HEK293 (cell line): ENCODE measurements at regions of chr16 and their contacts with region 1.

Region 1: GRCh38 chr16:12573730-12574383 is 229.8 kb downstream of the CPPED1 start:
- H3K4me3 ChIP-seq: no peak overlapping the region
- H3K27ac ChIP-seq: no peak overlapping the region
- H3K4me1 ChIP-seq: no peaks in the 10 kb centered on the region
- CTCF ChIP-seq: peak; percentile 19; the same call in 1 of the 2 replicates

Region 2: GRCh38 chr16:12819126-12820117 is 245.6 kb after region 1 on chr16:
- CTCF ChIA-PET with region 1: interaction called, 12 read pairs
- POLR2A ChIA-PET with region 1: no interaction called
- H3K4me3 ChIP-seq: no peak overlapping the region
- H3K27ac ChIP-seq: no peak overlapping the region
- H3K4me1 ChIP-seq: no peaks in the 10 kb centered on the region
- CTCF ChIP-seq: peak; percentile 33; the same call in 1 of the 2 replicates

Region 3: DNA sequence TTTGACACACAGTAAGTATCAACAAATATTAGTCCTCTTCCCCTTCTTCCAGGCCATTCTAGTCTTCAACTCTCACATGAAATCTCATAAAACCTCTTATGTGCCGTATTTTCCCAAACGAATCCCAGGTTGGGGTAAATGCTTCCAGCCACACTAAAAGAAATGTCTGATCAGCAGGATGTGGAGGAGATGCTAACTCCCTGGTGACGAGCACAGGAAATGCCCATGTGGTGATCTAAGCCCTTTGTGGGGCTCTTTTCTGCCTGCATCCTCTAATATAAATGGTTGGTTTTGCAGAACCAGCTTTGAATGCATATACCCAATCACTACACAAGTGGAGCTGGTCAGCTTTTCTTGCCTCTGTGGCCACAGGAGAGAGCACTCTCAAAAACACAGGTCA is 847.9 kb after region 1 on chr16:
- CTCF ChIA-PET with region 1: no interaction called
- POLR2A ChIA-PET with region 1: no interaction called
- H3K4me3 ChIP-seq: no peak overlapping the region
- H3K27ac ChIP-seq: no peak overlapping the region
- H3K4me1 ChIP-seq: no peaks in the 10 kb centered on the region
- CTCF ChIP-seq: no peak